Mammary epithelial cell (primary cell): ENCODE measurements at regions of chr10 and their contacts with region 1.

Region 1: DNA sequence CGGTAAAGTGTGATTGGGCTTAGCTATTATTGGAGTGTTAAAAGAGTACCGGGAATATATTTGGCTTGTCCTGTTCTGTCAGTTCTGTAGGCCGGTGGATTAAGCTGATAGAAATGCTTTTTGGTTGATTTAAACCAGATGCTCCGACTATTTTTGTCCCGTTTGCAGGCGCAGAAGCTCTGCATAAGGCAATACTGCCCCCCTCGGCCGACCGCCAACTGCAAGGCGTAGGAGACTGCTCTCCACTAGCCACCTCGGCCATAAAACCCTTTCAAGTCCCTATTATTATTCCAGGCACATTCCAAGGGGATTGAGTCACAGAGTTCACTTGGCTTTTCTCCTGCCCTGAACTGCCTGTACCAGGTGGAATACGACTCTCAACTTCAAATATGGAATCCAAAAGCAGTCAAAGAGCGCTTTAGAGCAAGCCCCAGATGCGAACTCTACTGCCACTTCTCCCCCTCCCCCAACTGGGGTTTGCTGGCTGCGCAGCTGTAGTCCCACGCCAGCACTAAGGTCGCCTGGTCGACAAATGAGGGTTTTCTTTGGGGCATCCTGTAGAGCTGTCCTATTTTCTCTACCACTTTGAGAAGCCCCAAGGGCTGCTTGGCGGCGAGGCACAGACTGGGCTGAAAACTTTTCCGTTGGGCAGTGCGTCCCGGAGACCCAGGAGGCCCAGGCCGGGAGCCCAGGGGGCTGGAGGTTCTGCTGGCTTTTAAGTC is 108.3 kb downstream of the REEP3 start:
- DNase-seq: peak; percentile 97
- H3K4me3 ChIP-seq: peak overlapping the region; percentile 43 to 72 (median 63)
- H3K27ac ChIP-seq: peak overlapping the region; percentile 97
- H3K4me1 ChIP-seq: peaks cover 30% of the 10 kb centered on the region
- H3K27me3 ChIP-seq: no peaks in the 10 kb centered on the region
- CTCF ChIP-seq: peak; percentile 86 to 87

Region 2: DNA sequence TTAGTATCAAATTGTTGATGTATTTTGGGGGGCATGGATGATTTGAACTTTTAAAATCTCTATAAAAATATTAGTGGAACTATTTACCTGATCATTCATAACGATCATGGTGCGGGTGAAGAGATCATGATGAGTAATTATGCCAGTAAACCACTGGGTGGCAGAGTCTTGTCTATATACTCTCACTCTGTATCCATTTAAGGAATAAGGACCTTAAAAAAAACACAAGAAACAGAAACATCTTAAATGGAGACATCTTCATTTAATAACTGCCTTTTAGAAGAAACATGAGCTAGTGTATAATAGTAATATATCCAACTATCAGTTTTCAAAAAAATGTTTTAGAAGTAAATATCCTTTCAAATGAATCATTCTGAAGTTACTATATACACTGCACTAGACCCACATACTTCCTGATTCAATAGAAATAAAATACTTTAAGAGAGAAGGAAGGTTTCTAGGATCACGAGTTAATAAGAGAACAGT is 412.4 kb before region 1 on chr10:
- CTCF ChIA-PET with region 1: interaction called, 4 read pairs
- dilution Hi-C with region 1: no loop called
- in situ Hi-C with region 1: loop called in 1 of 2 experiments (anchors 10 kb)
- intact Hi-C with region 1: loop called (anchors 1 kb)
- DNase-seq: peak; percentile 27
- H3K4me3 ChIP-seq: no peak overlapping the region
- H3K27ac ChIP-seq: no peak overlapping the region
- H3K4me1 ChIP-seq: no peaks in the 10 kb centered on the region
- H3K27me3 ChIP-seq: no peaks in the 10 kb centered on the region
- CTCF ChIP-seq: peak; percentile 59 to 64

Region 3: DNA sequence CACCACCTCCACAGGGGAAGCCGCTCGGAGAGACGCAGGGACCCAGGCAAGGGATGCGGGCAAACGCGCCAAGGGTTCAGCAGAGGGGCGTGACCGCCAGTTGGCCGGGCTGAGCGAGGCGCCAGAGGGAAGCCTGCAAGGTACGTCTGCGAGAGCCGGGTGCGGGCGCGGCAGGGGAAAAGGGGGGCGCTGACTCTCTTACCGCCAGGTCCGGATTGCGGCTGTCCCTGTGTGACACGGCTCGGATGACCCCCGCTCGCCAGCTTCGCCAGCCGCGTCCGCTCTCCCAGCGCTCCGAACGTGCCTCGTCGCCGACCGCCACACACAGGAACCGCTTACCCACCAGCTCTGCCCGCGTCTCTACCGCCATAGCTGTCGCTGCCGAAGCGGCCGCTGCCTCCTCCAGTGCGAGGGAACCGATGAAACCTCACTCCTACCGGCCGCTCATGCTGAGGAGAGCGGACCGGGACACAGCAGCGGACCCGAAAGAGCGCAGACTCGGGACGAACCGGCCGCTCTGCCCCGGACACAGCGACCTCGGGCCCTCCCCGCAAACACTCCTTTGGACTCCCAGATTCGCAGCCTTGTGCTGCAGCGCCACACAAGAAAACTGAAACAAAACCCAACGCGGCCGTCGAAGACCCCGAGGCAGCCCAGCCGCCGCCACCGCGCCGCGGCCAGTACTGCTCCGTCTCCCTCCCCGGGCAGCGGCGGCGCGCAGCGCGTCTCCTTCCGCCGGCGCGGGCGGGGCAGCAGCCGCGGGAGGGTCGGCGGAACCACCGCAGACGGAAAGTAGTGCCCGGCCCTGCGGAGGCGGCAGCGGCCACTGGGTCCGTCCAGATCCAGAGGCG is 164.0 kb before region 1 on chr10 and contains the start of gene JMJD1C:
- CTCF ChIA-PET with region 1: no interaction called
- dilution Hi-C with region 1: no loop called
- in situ Hi-C with region 1: no loop called
- intact Hi-C with region 1: loop called (anchors 1 kb)
- DNase-seq: peak; percentile 83
- H3K4me3 ChIP-seq: peak within 1 kb of the TSS; percentile 88 to 97 (median 92)
- H3K27ac ChIP-seq: peak within 1 kb of the TSS; percentile 88
- H3K4me1 ChIP-seq: peaks cover 4% of the 10 kb centered on the region
- H3K27me3 ChIP-seq: no peaks in the 10 kb centered on the region
- CTCF ChIP-seq: peak in 1 of 2 donors; percentile 1
- total RNA-seq, gene JMJD1C: 57.7 to 80.4 TPM

Region 4: DNA sequence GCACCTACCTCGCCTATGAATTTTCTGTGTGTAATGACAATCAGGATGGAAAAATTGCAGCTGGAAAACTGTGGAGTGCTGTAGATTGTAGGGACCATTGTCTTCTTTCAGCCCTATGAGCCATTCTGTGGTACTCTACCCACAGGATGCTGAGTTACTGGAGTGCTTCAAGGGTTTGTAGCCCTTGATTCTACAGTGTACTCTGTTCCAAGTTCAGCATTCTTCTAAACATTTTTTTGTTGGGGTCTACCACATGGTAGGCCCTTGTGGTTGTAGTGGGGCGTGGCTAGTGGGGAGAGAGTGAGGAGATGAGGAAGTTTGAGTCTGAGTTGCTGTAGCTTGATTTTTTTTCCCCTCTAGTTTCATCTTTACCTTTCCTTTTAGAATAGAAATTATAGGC is 74.9 kb before region 1 on chr10:
- CTCF ChIA-PET with region 1: no interaction called
- dilution Hi-C with region 1: no loop called
- in situ Hi-C with region 1: no loop called
- intact Hi-C with region 1: loop called (anchors 2 kb)
- DNase-seq: peak; percentile 82
- H3K4me3 ChIP-seq: peak overlapping the region in 1 of 3 experiments; percentile 2
- H3K27ac ChIP-seq: peak overlapping the region; percentile 100
- H3K4me1 ChIP-seq: peaks cover 37% of the 10 kb centered on the region
- H3K27me3 ChIP-seq: no peaks in the 10 kb centered on the region
- CTCF ChIP-seq: no peak

Region 5: GRCh38 chr10:63720072-63720537 is 90.6 kb after region 1 on chr10:
- CTCF ChIA-PET with region 1: interaction called, 5 read pairs
- dilution Hi-C with region 1: no loop called
- in situ Hi-C with region 1: no loop called
- intact Hi-C with region 1: loop called (anchors 1 kb)
- DNase-seq: peak; percentile 52
- H3K4me3 ChIP-seq: no peak overlapping the region
- H3K27ac ChIP-seq: peak overlapping the region; percentile 36
- H3K4me1 ChIP-seq: peaks cover 22% of the 10 kb centered on the region
- H3K27me3 ChIP-seq: no peaks in the 10 kb centered on the region
- CTCF ChIP-seq: peak; percentile 93 to 98

Region 6: DNA sequence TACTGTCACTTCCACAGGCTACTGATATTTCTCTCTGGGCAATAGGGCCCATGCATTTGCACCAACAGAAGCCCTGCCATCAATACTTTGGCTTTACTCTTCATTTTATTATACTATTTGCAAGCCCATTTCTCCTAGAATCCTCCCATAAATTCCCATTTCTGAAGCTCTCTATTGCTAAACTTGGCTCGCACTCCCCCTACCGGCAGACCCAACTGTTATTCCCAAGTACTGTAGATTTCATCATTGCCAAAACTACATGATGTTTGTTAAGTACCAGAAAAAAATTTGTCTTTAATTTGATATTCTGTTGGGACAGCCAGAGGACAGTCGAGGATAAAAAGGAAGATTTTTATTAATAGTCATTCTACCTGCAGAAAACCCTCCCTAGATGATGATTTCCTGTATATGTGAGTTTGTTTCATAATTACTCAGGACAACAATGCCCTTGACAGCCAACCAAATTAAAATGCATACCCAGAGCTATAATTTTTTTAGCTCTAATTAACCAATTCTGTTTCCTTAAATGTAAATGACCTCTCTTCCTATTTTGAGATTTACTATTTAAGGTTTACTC is 190.3 kb after region 1 on chr10:
- CTCF ChIA-PET with region 1: no interaction called
- dilution Hi-C with region 1: no loop called
- in situ Hi-C with region 1: no loop called
- intact Hi-C with region 1: loop called (anchors 5 kb)
- DNase-seq: peak; percentile 36
- H3K4me3 ChIP-seq: no peak overlapping the region
- H3K27ac ChIP-seq: no peak overlapping the region
- H3K4me1 ChIP-seq: no peaks in the 10 kb centered on the region
- H3K27me3 ChIP-seq: peaks cover 3% of the 10 kb centered on the region
- CTCF ChIP-seq: peak; percentile 87 to 93